ENCODE measurements at regions of chr12 and their contacts with region 1.

Region 1: DNA sequence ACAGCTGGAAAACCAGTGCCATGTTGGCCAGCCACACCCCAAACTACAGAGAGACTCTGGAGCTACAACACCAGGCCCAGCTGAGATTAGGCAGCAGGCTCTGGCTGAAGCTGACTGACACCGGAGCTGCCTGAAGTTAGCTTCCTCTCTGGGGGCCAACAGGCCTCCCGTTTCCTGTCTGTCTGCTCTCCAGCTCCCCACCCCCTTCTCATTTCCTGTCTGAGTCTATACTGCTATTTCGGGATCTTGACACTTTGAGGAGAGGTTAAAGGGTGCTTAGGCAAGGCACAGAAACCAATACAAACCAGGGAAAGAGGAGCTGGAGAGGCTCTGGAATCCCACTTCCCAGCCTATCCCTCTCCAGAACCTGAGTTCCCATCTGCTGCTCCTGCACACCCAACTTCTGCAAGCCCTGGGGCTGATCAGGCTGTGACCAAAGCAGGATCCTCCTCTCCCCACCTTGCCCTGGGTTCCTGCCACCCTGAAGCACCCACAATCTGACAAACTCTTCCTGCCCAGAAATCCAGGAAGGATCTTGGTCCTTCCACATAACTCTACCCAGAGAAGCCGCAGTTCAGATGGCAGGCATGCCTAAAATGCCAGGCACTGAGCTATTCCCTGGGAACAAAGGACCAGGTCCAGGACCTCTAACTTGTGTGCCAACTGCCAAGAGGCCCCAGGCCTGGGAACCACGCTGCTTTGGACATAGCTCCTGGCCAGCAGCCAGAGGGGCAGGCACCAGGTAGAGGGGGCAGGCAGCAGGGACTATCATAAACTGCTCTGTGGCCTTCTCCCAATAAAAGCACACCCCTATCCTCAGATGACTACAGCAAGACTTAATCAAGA is 39.9 kb downstream of the PRPF40B start:
- DNase-seq: peak; percentile 47 to 92 (median 80)
- ATAC-seq: peak; percentile 98
- H3K4me3 ChIP-seq: peak overlapping the region; percentile 27 to 42
- H3K4me3 Mint-ChIP-seq: peak overlapping the region; percentile 83
- H3K27ac ChIP-seq: peak overlapping the region; percentile 61 to 93
- H3K27ac Mint-ChIP-seq: peak overlapping the region; percentile 99
- H3K4me1 ChIP-seq: peaks cover 59% of the 10 kb centered on the region
- H3K4me1 Mint-ChIP-seq: peaks cover 83% of the 10 kb centered on the region
- H3K27me3 ChIP-seq: no peaks in the 10 kb centered on the region
- H3K27me3 Mint-ChIP-seq: no peaks in the 10 kb centered on the region
- CTCF ChIP-seq: no peak

Region 2: DNA sequence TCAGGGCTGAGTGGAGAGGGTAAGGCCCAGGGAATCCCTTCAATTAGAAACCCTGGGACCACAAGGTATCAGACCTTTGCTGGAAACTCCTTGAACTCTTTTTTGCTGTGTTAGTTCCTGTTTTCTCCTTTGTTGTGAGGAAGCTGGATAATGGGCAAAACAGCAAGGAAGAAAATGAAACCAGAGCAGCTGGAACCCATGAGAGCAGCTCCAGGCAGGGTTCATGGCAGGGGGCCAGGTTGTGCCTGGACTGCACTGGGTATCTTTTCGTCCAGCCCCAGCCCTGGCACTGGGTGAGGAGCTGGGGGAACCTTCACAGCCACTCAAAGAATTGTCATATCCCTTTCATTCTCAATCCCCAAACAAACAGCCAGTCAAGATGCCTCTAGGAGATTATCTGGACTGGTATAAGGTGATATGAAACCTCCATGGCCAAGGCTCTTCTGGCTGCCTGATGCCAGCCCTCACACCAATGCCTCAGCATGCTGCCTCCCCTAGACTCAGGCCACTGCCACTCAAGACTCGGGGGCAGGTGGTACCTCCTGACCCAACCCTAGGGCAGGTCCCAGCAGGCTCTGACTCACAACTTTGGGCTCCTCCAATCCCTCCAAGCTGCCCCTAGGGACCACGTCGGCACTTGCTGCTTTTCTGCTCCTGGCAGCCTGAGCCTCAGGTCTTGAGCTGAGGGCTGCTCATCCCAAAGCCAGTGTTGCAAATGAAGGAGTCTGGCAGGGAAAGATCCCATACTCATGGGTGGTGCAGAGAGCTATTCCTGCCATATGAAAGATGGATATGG is 74.3 kb before region 1 on chr12:
- CTCF ChIA-PET with region 1: no interaction called
- POLR2A ChIA-PET with region 1: no interaction called
- intact Hi-C with region 1: no loop called
- DNase-seq: no peak
- ATAC-seq: no peak
- H3K4me3 ChIP-seq: no peak overlapping the region
- H3K4me3 Mint-ChIP-seq: no peak overlapping the region
- H3K27ac ChIP-seq: no peak overlapping the region
- H3K27ac Mint-ChIP-seq: no peak overlapping the region
- H3K4me1 ChIP-seq: no peaks in the 10 kb centered on the region
- H3K4me1 Mint-ChIP-seq: no peaks in the 10 kb centered on the region
- H3K27me3 ChIP-seq: no peaks in the 10 kb centered on the region
- H3K27me3 Mint-ChIP-seq: no peaks in the 10 kb centered on the region
- CTCF ChIP-seq: no peak

Region 3: DNA sequence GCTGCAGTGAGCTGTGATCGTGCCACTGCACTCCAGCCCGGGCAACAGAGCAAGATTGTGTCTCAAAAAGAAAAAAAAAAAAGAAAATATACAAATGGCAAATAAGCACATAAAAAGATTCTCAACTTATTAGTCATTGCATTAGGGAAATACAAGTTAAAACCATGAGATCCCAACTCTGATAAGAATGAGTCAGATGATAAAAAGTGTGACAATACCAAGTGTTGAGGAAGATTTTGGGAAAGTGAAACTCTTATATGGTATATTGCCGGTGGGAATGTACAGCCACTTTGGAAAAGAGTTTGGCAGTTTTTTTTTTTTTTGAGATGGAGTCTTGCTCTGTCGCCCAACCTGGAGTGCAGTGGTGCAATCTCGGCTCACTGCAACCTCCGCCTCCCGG is 47.5 kb before region 1 on chr12:
- CTCF ChIA-PET with region 1: no interaction called
- POLR2A ChIA-PET with region 1: no interaction called
- intact Hi-C with region 1: no loop called
- DNase-seq: no peak
- ATAC-seq: no peak
- H3K4me3 ChIP-seq: no peak overlapping the region
- H3K4me3 Mint-ChIP-seq: no peak overlapping the region
- H3K27ac ChIP-seq: no peak overlapping the region
- H3K27ac Mint-ChIP-seq: no peak overlapping the region
- H3K4me1 ChIP-seq: no peaks in the 10 kb centered on the region
- H3K4me1 Mint-ChIP-seq: peaks cover 6% of the 10 kb centered on the region
- H3K27me3 ChIP-seq: peaks cover 0 to 6% of the 10 kb centered on the region in 2 experiments
- H3K27me3 Mint-ChIP-seq: peaks cover 22% of the 10 kb centered on the region
- CTCF ChIP-seq: no peak

Region 4: GRCh38 chr12:49673446-49674317 is 10.5 kb after region 1 on chr12:
- CTCF ChIA-PET with region 1: interaction called, 11 read pairs
- POLR2A ChIA-PET with region 1: interaction called, 30 read pairs
- intact Hi-C with region 1: loop called (anchors 1 kb)
- DNase-seq: peak in 3 of 9 experiments; percentile 18 to 30 (median 26)
- ATAC-seq: no peak
- H3K4me3 ChIP-seq: no peak overlapping the region
- H3K4me3 Mint-ChIP-seq: peak overlapping the region; percentile 26
- H3K27ac ChIP-seq: peak overlapping the region in 1 of 2 experiments; percentile 92
- H3K27ac Mint-ChIP-seq: peak overlapping the region; percentile 98
- H3K4me1 ChIP-seq: peaks cover 66% of the 10 kb centered on the region
- H3K4me1 Mint-ChIP-seq: peaks cover 84% of the 10 kb centered on the region
- H3K27me3 ChIP-seq: no peaks in the 10 kb centered on the region
- H3K27me3 Mint-ChIP-seq: no peaks in the 10 kb centered on the region
- CTCF ChIP-seq: no peak

Region 5: DNA sequence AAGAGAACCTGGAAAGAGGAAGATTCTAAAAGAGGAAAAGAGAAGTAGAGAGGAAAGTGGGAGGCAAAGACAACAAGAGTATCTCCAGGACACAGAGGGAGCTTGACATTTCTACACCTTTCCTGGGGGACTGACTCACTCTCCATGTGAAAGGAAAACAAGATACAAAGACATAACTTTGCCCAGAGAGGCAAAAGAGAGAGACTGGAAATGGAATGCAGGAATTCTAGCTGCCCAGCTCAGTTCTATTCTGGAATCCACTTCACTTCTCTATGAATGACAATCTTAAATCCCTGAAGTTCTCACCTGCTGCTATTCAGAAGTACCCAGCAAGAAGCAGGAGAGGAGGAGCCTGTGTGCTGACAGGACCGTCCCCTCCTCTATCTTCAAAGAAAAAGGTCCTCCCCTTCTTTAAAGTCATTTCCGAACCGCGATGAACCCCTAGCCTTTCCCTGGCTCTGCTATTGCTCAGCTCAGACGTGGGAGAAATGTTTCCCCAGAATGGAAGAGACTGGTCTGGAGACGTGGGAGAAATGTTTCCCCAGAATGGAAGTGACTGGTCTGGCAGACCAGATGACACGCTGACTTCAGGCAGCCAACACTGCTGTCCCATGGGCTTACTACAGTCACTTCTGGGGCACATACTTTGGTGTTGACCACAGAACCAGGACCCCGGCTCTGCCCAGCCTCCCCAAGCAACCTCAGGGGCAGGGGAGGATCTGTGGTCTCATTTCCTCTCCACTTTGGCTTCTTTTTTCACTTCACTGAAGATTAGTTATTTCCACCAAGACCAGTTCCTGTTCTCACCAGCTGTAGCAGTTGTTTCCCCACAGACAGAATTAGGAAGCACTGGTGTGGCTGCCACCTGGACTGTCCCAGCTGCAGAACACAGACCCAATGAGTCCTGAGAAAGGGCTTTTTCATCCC is 35.7 kb after region 1 on chr12:
- CTCF ChIA-PET with region 1: interaction called, 43 read pairs
- POLR2A ChIA-PET with region 1: interaction called, 4 read pairs
- intact Hi-C with region 1: loop called in 1 of 2 experiments (anchors 2 kb)
- DNase-seq: peak in 6 of 9 experiments; percentile 16 to 69 (median 46)
- ATAC-seq: peak; percentile 74
- H3K4me3 ChIP-seq: peak overlapping the region; percentile 15 to 42
- H3K4me3 Mint-ChIP-seq: peak overlapping the region; percentile 84
- H3K27ac ChIP-seq: peak overlapping the region in 1 of 2 experiments; percentile 56
- H3K27ac Mint-ChIP-seq: peak overlapping the region; percentile 87
- H3K4me1 ChIP-seq: peaks cover 29% of the 10 kb centered on the region
- H3K4me1 Mint-ChIP-seq: peaks cover 64% of the 10 kb centered on the region
- H3K27me3 ChIP-seq: no peaks in the 10 kb centered on the region
- H3K27me3 Mint-ChIP-seq: no peaks in the 10 kb centered on the region
- CTCF ChIP-seq: no peak

Region 6: GRCh38 chr12:51077971-51078370 is 1414.8 kb after region 1 on chr12:
- CTCF ChIA-PET with region 1: no interaction called
- POLR2A ChIA-PET with region 1: no interaction called
- intact Hi-C with region 1: no loop called
- DNase-seq: no peak
- ATAC-seq: no peak
- H3K4me3 ChIP-seq: no peak overlapping the region
- H3K4me3 Mint-ChIP-seq: no peak overlapping the region
- H3K27ac ChIP-seq: no peak overlapping the region
- H3K27ac Mint-ChIP-seq: no peak overlapping the region
- H3K4me1 ChIP-seq: peaks cover 12% of the 10 kb centered on the region
- H3K4me1 Mint-ChIP-seq: peaks cover 47% of the 10 kb centered on the region
- H3K27me3 ChIP-seq: no peaks in the 10 kb centered on the region
- H3K27me3 Mint-ChIP-seq: no peaks in the 10 kb centered on the region
- CTCF ChIP-seq: no peak

Measured in CD8-positive, alpha-beta T cell (primary cell).